ENCODE measurements at regions of chr19 and their contacts with region 1.

Region 1: DNA sequence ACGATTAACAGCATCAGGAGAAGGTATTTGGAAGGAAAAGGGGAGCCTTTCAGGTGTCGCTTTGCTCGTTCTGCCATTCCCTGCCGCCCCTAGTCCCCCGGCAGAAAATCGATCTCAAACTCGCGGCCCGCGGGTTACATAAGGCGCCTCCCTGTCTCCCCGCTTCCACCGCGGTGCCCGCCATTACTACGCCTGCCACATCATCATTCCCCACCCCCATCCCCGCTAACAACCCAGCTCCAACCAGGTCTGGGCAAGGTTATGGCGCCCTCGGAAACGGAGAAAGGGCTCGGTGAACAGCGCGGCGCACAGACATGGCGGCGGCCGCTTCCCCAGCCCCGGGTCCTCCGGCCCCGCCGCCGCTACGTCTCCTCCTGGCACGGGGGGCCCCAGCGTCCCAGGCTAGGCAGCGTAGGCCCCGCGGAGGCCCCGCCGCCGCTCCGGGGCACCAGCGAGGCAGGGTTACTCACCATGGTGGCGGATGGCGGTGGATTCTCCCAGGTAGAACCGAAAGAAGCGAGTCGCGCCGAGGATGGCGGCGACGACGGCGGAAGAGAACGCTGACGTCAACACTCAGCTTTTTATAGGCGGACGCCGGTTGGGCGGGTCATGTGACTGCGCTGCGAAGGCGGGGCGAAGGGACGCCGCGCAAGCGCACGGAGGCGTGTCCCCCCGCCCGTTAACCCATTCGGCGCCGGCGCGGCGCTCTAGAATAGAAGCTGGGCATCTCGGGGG is at the start of gene EEF2:
- DNase-seq: peak; percentile 89 to 97 (median 92)
- ATAC-seq: peak; percentile 58
- H3K4me3 ChIP-seq: peak within 1 kb of the TSS; percentile 88
- H3K4me3 Mint-ChIP-seq: peak within 1 kb of the TSS; percentile 97
- H3K27ac ChIP-seq: peak within 1 kb of the TSS; percentile 90 to 92
- H3K27ac Mint-ChIP-seq: peak within 1 kb of the TSS; percentile 91
- H3K4me1 ChIP-seq: peaks cover 70% of the 10 kb centered on the region
- H3K4me1 Mint-ChIP-seq: peaks cover 52% of the 10 kb centered on the region
- H3K27me3 ChIP-seq: no peaks in the 10 kb centered on the region
- H3K27me3 Mint-ChIP-seq: no peaks in the 10 kb centered on the region
- CTCF ChIP-seq: no peak
- total RNA-seq, gene EEF2: 2,756 to 2,866 TPM

Region 2: DNA sequence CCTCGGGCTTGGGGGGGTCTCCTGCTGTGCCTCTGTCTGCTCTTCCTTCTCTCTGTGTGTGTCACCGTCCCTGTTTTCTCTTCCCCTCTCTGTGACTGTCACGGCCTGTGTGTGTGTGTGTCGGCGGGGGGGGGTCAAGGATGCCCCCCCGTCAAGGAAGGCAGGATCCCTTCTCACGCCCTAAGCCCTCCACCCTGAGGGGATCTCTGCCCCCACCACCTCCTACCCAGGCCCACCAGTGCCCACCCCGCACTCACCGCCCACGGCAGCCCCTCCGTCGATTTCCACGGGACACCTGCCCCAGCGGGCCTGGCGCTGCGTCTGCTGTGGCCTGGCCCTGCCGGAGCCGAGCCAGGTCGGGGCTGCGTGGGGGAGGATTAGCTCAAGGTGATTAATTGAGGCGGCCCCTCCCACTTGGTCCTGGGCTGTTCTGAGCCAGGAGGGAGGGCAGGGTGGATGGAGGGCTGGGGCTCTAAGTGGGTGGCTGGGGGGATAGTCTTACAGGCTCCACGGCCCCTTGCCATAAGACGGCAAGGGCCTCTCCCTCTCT is 213.1 kb before region 1 on chr19 and contains the start of gene RAX2:
- CTCF ChIA-PET with region 1: no interaction called
- POLR2A ChIA-PET with region 1: no interaction called
- intact Hi-C with region 1: no loop called
- DNase-seq: peak in 1 of 14 experiments; percentile 21
- ATAC-seq: no peak
- H3K4me3 ChIP-seq: no peak within 1 kb of the TSS
- H3K4me3 Mint-ChIP-seq: no peak within 1 kb of the TSS
- H3K27ac ChIP-seq: no peak within 1 kb of the TSS
- H3K27ac Mint-ChIP-seq: no peak within 1 kb of the TSS
- H3K4me1 ChIP-seq: peaks cover 3% of the 10 kb centered on the region
- H3K4me1 Mint-ChIP-seq: no peaks in the 10 kb centered on the region
- H3K27me3 ChIP-seq: no peaks in the 10 kb centered on the region
- H3K27me3 Mint-ChIP-seq: no peaks in the 10 kb centered on the region
- CTCF ChIP-seq: no peak
- total RNA-seq, gene RAX2: not detected

Region 3: GRCh38 chr19:3970808-3971598 is 14.1 kb before region 1 on chr19 and contains the start of gene DAPK3:
- CTCF ChIA-PET with region 1: interaction called, 29 read pairs
- POLR2A ChIA-PET with region 1: interaction called, 72 read pairs
- intact Hi-C with region 1: loop called in 1 of 2 experiments (anchors 2 kb)
- DNase-seq: peak; percentile 77 to 94 (median 89)
- ATAC-seq: peak; percentile 91
- H3K4me3 ChIP-seq: peak within 1 kb of the TSS; percentile 95
- H3K4me3 Mint-ChIP-seq: peak within 1 kb of the TSS; percentile 88
- H3K27ac ChIP-seq: peak within 1 kb of the TSS; percentile 67 to 76
- H3K27ac Mint-ChIP-seq: peak within 1 kb of the TSS; percentile 84
- H3K4me1 ChIP-seq: peaks cover 33% of the 10 kb centered on the region
- H3K4me1 Mint-ChIP-seq: peaks cover 22% of the 10 kb centered on the region
- H3K27me3 ChIP-seq: no peaks in the 10 kb centered on the region
- H3K27me3 Mint-ChIP-seq: no peaks in the 10 kb centered on the region
- CTCF ChIP-seq: no peak
- total RNA-seq, gene DAPK3: 21.1 to 22.9 TPM

Region 4: GRCh38 chr19:4065430-4066175 is 80.5 kb after region 1 on chr19:
- CTCF ChIA-PET with region 1: interaction called, 6 read pairs
- POLR2A ChIA-PET with region 1: interaction called, 18 read pairs
- intact Hi-C with region 1: loop called (anchors 1 to 2 kb)
- DNase-seq: peak; percentile 94 to 99 (median 97)
- ATAC-seq: peak; percentile 74
- H3K4me3 ChIP-seq: peak overlapping the region; percentile 89
- H3K4me3 Mint-ChIP-seq: peak overlapping the region; percentile 88
- H3K27ac ChIP-seq: peak overlapping the region in 1 of 2 donors; percentile 83
- H3K27ac Mint-ChIP-seq: peak overlapping the region; percentile 98
- H3K4me1 ChIP-seq: peaks cover 68% of the 10 kb centered on the region
- H3K4me1 Mint-ChIP-seq: peaks cover 33% of the 10 kb centered on the region
- H3K27me3 ChIP-seq: no peaks in the 10 kb centered on the region
- H3K27me3 Mint-ChIP-seq: no peaks in the 10 kb centered on the region
- CTCF ChIP-seq: no peak

Region 5: GRCh38 chr19:4108767-4109625 is 123.9 kb after region 1 on chr19:
- CTCF ChIA-PET with region 1: interaction called, 8 read pairs
- POLR2A ChIA-PET with region 1: interaction called, 6 read pairs
- intact Hi-C with region 1: loop called in 1 of 2 experiments (anchors 10 kb)
- DNase-seq: peak; percentile 39 to 92 (median 76)
- ATAC-seq: peak; percentile 59
- H3K4me3 ChIP-seq: peak overlapping the region; percentile 16
- H3K4me3 Mint-ChIP-seq: peak overlapping the region; percentile 68
- H3K27ac ChIP-seq: peak overlapping the region; percentile 53 to 75
- H3K27ac Mint-ChIP-seq: peak overlapping the region; percentile 96
- H3K4me1 ChIP-seq: peaks cover 75% of the 10 kb centered on the region
- H3K4me1 Mint-ChIP-seq: peaks cover 46% of the 10 kb centered on the region
- H3K27me3 ChIP-seq: no peaks in the 10 kb centered on the region
- H3K27me3 Mint-ChIP-seq: no peaks in the 10 kb centered on the region
- CTCF ChIP-seq: no peak

Region 6: GRCh38 chr19:4139614-4140236 is 154.7 kb after region 1 on chr19:
- CTCF ChIA-PET with region 1: interaction called, 36 read pairs
- POLR2A ChIA-PET with region 1: interaction called, 10 read pairs
- intact Hi-C with region 1: loop called (anchors 1 kb)
- DNase-seq: peak; percentile 77 to 95 (median 88)
- ATAC-seq: peak; percentile 93
- H3K4me3 ChIP-seq: no peak overlapping the region
- H3K4me3 Mint-ChIP-seq: no peak overlapping the region
- H3K27ac ChIP-seq: no peak overlapping the region
- H3K27ac Mint-ChIP-seq: no peak overlapping the region
- H3K4me1 ChIP-seq: peaks cover 15% of the 10 kb centered on the region
- H3K4me1 Mint-ChIP-seq: peaks cover 11% of the 10 kb centered on the region
- H3K27me3 ChIP-seq: peaks cover 0 to 3% of the 10 kb centered on the region in 2 experiments
- H3K27me3 Mint-ChIP-seq: peaks cover 7% of the 10 kb centered on the region
- CTCF ChIP-seq: peak; percentile 74

Region 7: DNA sequence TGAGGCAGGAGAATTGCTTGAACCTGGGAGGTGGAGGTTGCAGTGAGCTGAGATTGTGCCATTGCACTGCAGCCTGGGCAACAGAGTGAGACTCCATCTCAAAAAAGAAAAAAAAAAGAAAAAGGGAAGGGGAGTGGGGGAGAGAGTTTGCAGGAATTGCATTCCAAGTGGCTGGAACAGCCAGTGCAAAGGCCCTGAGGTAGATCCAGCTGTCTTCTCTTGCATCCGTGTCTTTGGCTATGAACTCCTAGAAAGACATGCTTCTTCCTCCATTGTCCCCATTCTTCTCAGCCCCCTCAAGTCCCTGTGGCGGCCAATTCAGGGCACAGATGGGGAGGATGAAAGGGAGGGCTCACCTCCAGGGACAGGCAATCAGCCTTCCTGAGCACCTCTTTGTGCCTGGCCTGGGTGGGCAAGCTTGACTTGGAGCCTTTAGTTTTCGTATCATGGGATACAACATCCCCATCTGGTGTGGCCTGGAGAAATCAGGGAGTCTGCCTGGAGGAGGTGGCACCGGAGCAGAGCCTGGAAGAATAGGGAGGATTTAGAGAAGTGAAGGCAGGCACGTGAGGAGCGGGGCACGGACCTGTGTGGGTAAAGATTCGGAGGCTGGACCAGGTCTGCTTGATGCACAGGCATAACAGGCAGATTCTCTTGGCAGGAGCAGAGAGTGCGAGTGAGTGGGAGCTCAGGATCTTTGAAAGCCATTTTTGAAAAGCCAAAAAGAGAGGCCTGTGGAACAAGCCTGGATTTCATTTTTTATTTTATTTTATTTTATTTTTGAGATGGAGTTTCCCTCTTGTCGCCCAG is 202.4 kb after region 1 on chr19:
- CTCF ChIA-PET with region 1: no interaction called
- POLR2A ChIA-PET with region 1: interaction called, 3 read pairs
- intact Hi-C with region 1: loop called (anchors 1 to 2 kb)
- DNase-seq: no peak
- ATAC-seq: no peak
- H3K4me3 ChIP-seq: no peak overlapping the region
- H3K4me3 Mint-ChIP-seq: no peak overlapping the region
- H3K27ac ChIP-seq: no peak overlapping the region
- H3K27ac Mint-ChIP-seq: no peak overlapping the region
- H3K4me1 ChIP-seq: peaks cover 18% of the 10 kb centered on the region
- H3K4me1 Mint-ChIP-seq: peaks cover 3% of the 10 kb centered on the region
- H3K27me3 ChIP-seq: no peaks in the 10 kb centered on the region
- H3K27me3 Mint-ChIP-seq: peaks cover 6% of the 10 kb centered on the region
- CTCF ChIP-seq: no peak

Region 8: DNA sequence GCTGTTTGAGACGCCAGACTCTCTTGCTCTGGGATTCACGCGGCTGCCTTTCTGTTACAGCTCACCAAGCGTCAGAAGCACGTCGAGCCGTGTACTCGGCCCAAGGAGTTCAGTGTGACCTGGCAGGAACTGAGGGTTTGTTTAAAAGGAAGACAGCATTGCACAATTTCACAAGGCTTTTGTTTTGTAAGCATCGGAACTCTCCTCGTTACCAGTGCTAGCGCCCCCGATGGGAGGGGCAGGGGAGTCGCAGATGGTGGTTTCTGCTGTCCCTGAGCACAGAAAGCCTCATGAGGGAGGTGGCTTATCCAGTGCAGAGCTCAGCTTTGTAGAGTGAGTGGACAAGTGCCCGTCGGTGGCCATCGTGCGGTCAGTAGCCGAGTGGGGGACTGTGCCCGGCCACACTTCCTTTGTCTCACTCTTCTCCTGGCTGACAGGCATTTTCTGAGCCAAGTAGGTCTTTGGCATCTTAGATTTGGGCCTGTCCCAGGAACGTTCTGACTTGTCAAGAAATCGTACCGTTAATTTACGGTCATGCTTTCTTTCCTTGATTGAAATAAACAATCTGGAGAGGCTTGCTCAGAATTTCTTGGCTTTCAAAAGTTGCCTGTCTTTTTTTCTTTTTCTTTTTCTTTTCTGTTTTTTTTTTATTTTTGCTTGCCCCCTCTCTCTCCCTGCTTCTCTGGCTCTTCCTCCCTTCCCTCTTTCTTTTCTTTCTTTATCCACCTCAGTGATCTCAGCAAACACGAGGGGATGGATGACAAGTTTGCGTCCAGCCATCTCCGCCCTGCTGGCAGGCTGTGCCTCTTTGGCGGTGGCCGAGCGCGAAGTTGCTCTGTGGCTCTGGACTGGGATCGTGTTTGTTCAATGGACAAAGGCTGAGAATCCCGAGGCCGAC is 991.6 kb after region 1 on chr19:
- CTCF ChIA-PET with region 1: no interaction called
- POLR2A ChIA-PET with region 1: no interaction called
- intact Hi-C with region 1: no loop called
- DNase-seq: peak in 3 of 14 experiments; percentile 34 to 72 (median 59)
- ATAC-seq: peak; percentile 46
- H3K4me3 ChIP-seq: no peak overlapping the region
- H3K4me3 Mint-ChIP-seq: no peak overlapping the region
- H3K27ac ChIP-seq: no peak overlapping the region
- H3K27ac Mint-ChIP-seq: no peak overlapping the region
- H3K4me1 ChIP-seq: peaks cover 38% of the 10 kb centered on the region
- H3K4me1 Mint-ChIP-seq: peaks cover 13% of the 10 kb centered on the region
- H3K27me3 ChIP-seq: no peaks in the 10 kb centered on the region
- H3K27me3 Mint-ChIP-seq: no peaks in the 10 kb centered on the region
- CTCF ChIP-seq: no peak

Measured in CD4-positive, alpha-beta T cell (primary cell).